ENCODE measurements at regions of chr1 and their contacts with region 1.

Region 1: DNA sequence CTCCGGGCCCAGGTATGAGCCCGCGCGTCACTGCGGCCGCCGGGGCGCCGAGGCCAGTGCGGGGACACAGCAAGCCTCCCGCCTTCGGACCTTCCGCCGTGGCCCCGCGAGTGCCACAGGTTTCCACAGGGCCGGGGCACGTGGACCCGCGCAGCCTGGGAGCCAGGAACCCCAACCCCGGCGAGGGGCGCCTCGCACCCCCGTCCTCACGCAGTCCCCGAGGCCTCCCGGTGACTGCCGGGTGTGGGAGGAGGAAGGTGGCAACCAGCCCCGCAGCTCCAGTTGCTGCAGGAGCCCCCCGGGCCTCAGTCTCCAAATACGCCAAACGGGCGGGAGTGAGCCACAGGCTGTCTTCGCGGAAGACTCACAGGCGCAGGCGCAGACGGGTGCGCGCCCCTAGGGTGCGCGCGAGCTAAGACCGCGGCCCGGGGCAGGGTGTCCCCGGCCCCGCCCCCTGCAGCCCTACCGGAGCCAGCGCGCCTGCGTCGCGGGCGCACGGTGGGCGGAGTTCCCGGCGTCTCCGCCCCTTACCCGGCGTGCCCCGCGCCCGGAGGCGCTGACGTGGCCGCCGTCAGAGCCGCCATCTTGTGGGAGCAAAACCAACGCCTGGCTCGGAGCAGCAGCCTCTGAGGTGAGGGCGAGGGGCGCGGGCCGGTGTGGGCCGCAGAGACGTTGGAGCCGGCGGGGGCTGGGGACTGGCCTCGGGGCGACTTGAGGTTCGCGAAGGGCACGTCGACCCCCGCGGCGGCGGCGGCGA is at the start of gene ARF1:
- DNase-seq: peak; percentile 89
- H3K4me3 Mint-ChIP-seq: peak within 1 kb of the TSS; percentile 89
- H3K27ac Mint-ChIP-seq: peak within 1 kb of the TSS; percentile 92
- H3K4me1 Mint-ChIP-seq: peaks cover 42% of the 10 kb centered on the region
- H3K27me3 Mint-ChIP-seq: no peaks in the 10 kb centered on the region
- total RNA-seq, gene ARF1: 409 and 410 TPM in 2 replicates

Region 2: DNA sequence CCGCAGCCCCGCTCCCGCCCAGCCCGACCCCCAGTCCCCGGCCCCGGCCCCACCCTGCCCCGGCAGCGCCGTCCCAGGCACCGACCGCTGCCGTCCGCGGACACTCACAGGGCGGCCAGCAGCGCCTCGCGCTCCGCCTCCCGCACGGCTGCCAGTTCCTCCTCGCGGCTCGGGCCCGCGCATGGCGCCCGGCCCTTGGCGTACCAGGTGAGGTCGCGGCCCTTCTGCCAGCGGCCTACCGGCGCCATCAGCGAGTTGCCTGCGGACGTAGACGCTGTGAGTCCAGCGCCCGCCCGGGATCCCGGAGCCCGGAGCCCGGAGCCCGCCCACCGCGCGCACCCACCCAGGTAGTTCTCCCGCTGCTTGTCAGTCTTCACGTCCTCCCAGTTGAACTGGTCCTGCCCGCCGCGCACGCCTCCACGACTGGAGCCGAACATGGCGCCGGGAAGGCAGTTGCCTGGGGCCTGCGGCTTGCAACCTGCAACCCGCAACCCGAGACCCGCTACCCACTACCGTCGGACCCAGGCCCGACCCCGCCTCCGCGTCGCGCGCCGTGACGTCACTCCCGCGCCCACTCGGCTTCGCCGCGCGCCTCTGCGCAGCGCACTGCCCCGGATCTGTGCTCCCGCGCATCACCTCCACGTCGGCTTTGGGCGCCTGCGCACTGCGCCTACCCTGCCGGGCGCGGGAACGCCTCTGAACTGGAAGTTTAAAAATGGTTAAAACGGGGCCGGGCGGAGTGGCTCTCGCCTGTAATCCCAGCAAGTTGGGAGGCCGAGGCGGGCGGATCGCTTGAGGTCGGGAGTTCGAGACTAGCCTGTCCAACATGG is 20.7 kb after region 1 on chr1 and contains the start of gene C1orf35:
- intact Hi-C with region 1: loop called (anchors 1 kb)
- DNase-seq: peak; percentile 95
- H3K4me3 Mint-ChIP-seq: peak within 1 kb of the TSS; percentile 91
- H3K27ac Mint-ChIP-seq: peak within 1 kb of the TSS; percentile 90
- H3K4me1 Mint-ChIP-seq: peaks cover 22% of the 10 kb centered on the region
- H3K27me3 Mint-ChIP-seq: no peaks in the 10 kb centered on the region
- total RNA-seq, gene C1orf35: 23.9 and 24.5 TPM in 2 replicates